Activated CD8-positive, alpha-beta T cell treated with anti-CD3 and anti-CD28 coated beads, Interleukin-2, amount 10 ng/mL, durations not matched to agents 7 days and 5 days (primary cell): ENCODE measurements at regions of chr12 and their contacts with region 1.

Region 1: DNA sequence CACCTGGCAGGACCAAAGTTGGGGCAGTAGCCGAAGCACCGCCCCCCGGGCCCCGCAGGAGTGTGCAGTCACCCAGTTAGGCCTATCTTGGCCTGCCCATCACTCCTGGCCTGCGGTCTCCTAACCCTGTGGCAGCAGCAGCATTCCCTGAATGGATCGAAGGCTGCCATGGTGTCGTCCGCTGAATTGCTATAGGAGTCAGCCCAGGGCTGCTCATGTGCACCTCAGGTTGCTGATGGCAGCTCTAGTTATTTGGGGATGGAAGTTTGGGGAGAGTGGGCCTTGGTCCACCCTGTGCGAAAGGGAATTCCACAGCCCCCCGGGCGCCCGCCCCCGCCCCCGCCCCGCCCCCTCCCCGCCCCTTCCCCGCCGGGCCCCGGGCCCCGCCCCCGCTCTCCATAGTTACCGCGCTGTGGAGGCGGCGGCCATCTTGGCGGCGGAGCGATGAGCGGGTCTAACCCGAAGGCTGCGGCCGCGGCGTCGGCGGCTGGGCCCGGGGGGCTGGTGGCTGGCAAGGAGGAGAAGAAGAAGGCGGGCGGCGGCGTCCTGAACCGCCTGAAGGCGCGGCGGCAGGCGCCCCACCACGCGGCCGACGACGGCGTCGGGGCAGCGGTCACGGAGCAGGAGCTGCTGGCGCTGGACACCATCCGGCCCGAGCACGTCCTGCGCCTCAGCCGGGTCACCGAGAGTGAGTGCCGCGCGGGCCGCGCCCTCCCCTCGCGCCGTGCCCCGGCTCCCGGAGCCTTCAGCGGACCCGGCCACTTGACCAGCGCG is at the start of gene UNC119B:
- DNase-seq: peak; percentile 77
- ATAC-seq: peak; percentile 83
- H3K4me3 Mint-ChIP-seq: peak within 1 kb of the TSS; percentile 87
- H3K27ac Mint-ChIP-seq: peak within 1 kb of the TSS; percentile 81
- H3K4me1 Mint-ChIP-seq: peaks cover 37% of the 10 kb centered on the region
- H3K27me3 Mint-ChIP-seq: no peaks in the 10 kb centered on the region
- total RNA-seq, gene UNC119B: 18.5 to 18.9 TPM

Region 2: GRCh38 chr12:120495723-120496412 is 214.3 kb before region 1 on chr12 and contains the start of gene DYNLL1:
- CTCF ChIA-PET with region 1: no interaction called
- POLR2A ChIA-PET with region 1: no interaction called
- DNase-seq: peak; percentile 97
- ATAC-seq: peak; percentile 94
- H3K4me3 Mint-ChIP-seq: peak within 1 kb of the TSS; percentile 89
- H3K27ac Mint-ChIP-seq: peak within 1 kb of the TSS; percentile 85
- H3K4me1 Mint-ChIP-seq: peaks cover 35% of the 10 kb centered on the region
- H3K27me3 Mint-ChIP-seq: no peaks in the 10 kb centered on the region
- total RNA-seq, gene DYNLL1: 273 to 275 TPM

Region 3: GRCh38 chr12:120614873-120615272 is 95.3 kb before region 1 on chr12:
- CTCF ChIA-PET with region 1: no interaction called
- POLR2A ChIA-PET with region 1: no interaction called
- DNase-seq: no peak
- ATAC-seq: no peak
- H3K4me3 Mint-ChIP-seq: no peak overlapping the region
- H3K27ac Mint-ChIP-seq: no peak overlapping the region
- H3K4me1 Mint-ChIP-seq: no peaks in the 10 kb centered on the region
- H3K27me3 Mint-ChIP-seq: peaks cover 20% of the 10 kb centered on the region

Region 4: GRCh38 chr12:120686690-120687577 is 23.3 kb before region 1 on chr12 and contains the start of gene MLEC:
- CTCF ChIA-PET with region 1: interaction called, 21 read pairs
- POLR2A ChIA-PET with region 1: interaction called, 6 read pairs
- DNase-seq: peak; percentile 99
- ATAC-seq: peak; percentile 87
- H3K4me3 Mint-ChIP-seq: peak within 1 kb of the TSS; percentile 93
- H3K27ac Mint-ChIP-seq: peak within 1 kb of the TSS; percentile 81
- H3K4me1 Mint-ChIP-seq: peaks cover 54% of the 10 kb centered on the region
- H3K27me3 Mint-ChIP-seq: no peaks in the 10 kb centered on the region
- total RNA-seq, gene MLEC: 95.0 to 102 TPM

Region 5: DNA sequence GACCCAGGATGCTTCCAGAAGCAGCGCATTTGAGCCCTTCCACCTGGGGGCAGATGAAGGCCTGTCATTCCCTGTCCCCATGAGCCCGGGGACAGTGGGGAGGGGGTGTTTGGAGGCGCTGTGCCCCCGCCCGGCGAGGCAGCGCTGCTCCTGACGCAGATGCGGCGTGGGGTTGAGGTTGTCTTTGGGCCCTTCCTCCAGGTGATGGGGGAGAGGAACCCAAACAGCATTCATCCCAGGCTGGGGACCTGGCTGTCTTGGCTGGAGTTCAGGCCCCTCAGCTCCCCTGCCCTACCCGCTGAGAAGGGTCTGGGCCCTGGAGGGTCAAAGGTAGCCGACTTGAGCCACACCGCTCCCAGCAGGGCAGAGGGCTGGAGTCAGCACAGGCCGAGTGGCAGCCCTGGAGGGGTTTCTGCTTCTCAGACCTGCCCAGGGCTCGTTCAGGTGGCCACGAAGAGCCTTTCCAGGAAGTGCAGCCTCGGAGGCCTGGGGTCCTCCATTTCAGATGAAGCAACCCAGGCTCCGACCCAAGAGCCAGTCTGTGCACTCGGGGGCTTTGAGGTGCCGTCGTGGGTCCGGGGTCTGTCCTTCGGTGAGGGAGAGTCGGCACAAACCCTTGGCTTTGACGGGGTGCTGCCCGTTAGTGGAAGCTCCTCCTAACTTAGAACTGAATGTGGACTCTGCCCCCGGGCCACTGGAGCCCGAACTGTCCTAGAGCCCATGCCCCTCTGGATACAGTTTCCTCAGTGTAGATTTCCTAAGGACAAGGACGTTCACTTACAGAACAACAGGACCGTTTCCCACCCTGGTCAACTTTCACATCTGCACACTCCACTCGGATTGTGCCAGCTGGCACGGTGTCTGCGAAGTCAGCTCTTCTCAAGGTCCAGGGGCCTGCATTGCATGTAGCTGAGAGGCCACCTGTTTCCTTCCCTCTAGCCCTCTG is 31.5 kb after region 1 on chr12:
- CTCF ChIA-PET with region 1: no interaction called
- POLR2A ChIA-PET with region 1: no interaction called
- DNase-seq: no peak
- ATAC-seq: no peak
- H3K4me3 Mint-ChIP-seq: no peak overlapping the region
- H3K27ac Mint-ChIP-seq: no peak overlapping the region
- H3K4me1 Mint-ChIP-seq: no peaks in the 10 kb centered on the region
- H3K27me3 Mint-ChIP-seq: no peaks in the 10 kb centered on the region

Region 6: DNA sequence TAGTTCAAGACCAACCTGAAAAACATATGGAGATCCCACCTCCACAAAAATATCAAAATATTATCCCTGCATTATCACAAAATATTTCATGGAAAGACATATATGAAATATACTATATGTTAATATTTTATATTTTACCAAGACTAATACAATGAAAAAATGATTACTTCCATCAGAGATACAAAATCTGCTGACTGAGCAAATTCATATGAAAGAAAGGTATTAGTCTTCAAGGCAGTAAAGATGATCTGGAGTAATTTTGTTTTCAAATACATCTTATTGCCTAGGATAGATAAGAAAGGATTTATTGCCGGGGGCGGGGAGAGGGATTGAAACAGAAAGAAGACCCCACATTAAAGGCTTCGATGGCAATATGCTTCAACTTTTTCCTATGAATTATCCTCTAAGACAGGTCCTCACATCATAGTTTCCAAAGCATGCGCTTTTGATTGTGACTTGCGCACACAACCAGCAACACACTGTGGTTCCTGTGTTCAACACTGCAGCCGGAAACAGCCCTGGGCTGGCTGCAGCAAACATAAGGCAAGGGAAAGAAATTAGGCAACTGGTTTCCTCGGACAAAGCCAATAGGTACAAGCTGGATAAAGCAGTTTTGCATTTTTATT is 110.8 kb after region 1 on chr12:
- CTCF ChIA-PET with region 1: no interaction called
- POLR2A ChIA-PET with region 1: no interaction called
- DNase-seq: peak; percentile 48
- ATAC-seq: peak; percentile 91
- H3K4me3 Mint-ChIP-seq: no peak overlapping the region
- H3K27ac Mint-ChIP-seq: peak overlapping the region; percentile 10
- H3K4me1 Mint-ChIP-seq: peaks cover 14% of the 10 kb centered on the region
- H3K27me3 Mint-ChIP-seq: no peaks in the 10 kb centered on the region